HCT116 (cell line): ENCODE measurements at regions of chr5 and their contacts with region 1.

Region 1: GRCh38 chr5:51018423-51018822 is 352.0 kb downstream of the PARP8 start:
- DNase-seq: no peak
- ATAC-seq: no peak
- H3K4me3 ChIP-seq: no peak overlapping the region
- H3K27ac ChIP-seq: no peak overlapping the region
- H3K4me1 ChIP-seq: no peaks in the 10 kb centered on the region
- H3K27me3 ChIP-seq: no peaks in the 10 kb centered on the region
- CTCF ChIP-seq: no peak
- POLR2A ChIP-seq: no peak
- RAD21 ChIP-seq: no peak

Region 2: DNA sequence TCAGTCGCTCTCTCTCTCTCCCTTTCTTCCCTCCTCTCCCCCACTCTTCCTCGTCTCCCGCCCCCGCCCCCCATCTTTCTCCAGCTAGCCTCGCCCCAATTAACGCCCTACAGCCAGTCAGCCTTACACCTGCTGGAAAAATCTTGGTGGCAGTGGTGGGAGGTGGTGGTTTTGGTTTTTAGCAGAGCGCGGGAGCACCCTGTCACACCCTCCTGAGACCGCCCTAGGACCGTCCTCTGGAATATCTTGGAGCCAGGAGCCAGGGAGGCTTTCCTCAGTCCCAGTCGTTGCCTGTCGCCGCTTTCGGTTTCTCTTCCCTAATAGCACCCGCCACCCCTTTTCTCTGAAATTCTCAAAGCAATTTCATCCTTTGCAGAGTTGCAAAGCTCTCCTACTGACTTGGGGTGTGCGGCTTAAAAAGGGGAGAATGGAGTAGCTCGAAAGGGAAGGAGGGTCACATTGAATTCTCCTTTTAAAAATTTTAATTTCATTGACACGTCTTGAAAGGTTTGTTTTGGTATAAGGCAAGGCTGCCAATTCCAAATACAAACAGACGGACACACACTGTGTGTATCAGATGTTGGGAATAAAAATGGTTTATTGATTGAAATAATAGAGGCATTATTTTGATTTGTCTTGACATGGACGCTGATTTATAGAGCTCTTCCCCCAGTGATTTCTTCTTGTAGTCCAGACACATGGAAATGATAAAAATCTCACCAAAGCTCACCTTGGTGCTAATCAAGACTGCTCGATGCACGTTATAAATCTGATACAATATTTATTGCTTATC is 50.7 kb before region 1 on chr5:
- CTCF ChIA-PET with region 1: no interaction called
- POLR2A ChIA-PET with region 1: no interaction called
- RAD21 ChIA-PET with region 1: no interaction called
- intact Hi-C with region 1: no loop called
- DNase-seq: no peak
- ATAC-seq: no peak
- H3K4me3 ChIP-seq: no peak overlapping the region
- H3K27ac ChIP-seq: no peak overlapping the region
- H3K4me1 ChIP-seq: no peaks in the 10 kb centered on the region; a peak in 1 of 4 replicates
- H3K27me3 ChIP-seq: no peaks in the 10 kb centered on the region
- CTCF ChIP-seq: no peak
- POLR2A ChIP-seq: no peak
- RAD21 ChIP-seq: no peak

Region 3: GRCh38 chr5:50995272-50995942 is 23.0 kb before region 1 on chr5:
- CTCF ChIA-PET with region 1: no interaction called
- POLR2A ChIA-PET with region 1: no interaction called
- RAD21 ChIA-PET with region 1: no interaction called
- intact Hi-C with region 1: loop called (anchors 1 kb)
- DNase-seq: no peak
- ATAC-seq: no peak
- H3K4me3 ChIP-seq: no peak overlapping the region
- H3K27ac ChIP-seq: no peak overlapping the region
- H3K4me1 ChIP-seq: no peaks in the 10 kb centered on the region
- H3K27me3 ChIP-seq: no peaks in the 10 kb centered on the region
- CTCF ChIP-seq: no peak
- POLR2A ChIP-seq: no peak
- RAD21 ChIP-seq: no peak; the same call in 1 of the 2 replicates

Region 4: GRCh38 chr5:51859624-51860023 is 841.2 kb after region 1 on chr5:
- CTCF ChIA-PET with region 1: no interaction called
- POLR2A ChIA-PET with region 1: no interaction called
- RAD21 ChIA-PET with region 1: no interaction called
- intact Hi-C with region 1: no loop called
- DNase-seq: no peak
- ATAC-seq: no peak
- H3K4me3 ChIP-seq: no peak overlapping the region
- H3K27ac ChIP-seq: no peak overlapping the region
- H3K4me1 ChIP-seq: 0 out of 4 replicates have a peak, but pooled peaks cover 3 to 7% of the 10 kb centered on the region in 2 experiments
- H3K27me3 ChIP-seq: no peaks in the 10 kb centered on the region
- CTCF ChIP-seq: no peak
- POLR2A ChIP-seq: no peak
- RAD21 ChIP-seq: no peak